ENCODE measurements at regions of chr13 and their contacts with region 1.

Region 1: GRCh38 chr13:28027607-28028364 is 39.3 kb upstream of the URAD start:
- DNase-seq: no peak
- H3K4me3 ChIP-seq: no peak overlapping the region
- H3K27ac ChIP-seq: no peak overlapping the region
- H3K4me1 ChIP-seq: no peaks in the 10 kb centered on the region
- CTCF ChIP-seq: no peak

Region 2: GRCh38 chr13:28012896-28013295 is 14.9 kb before region 1 on chr13:
- CTCF ChIA-PET with region 1: no interaction called
- POLR2A ChIA-PET with region 1: interaction called, 11 read pairs
- intact Hi-C with region 1: no loop called
- DNase-seq: peak; percentile 12
- H3K4me3 ChIP-seq: no peak overlapping the region
- H3K27ac ChIP-seq: no peak overlapping the region
- H3K4me1 ChIP-seq: peaks cover 6% of the 10 kb centered on the region
- CTCF ChIP-seq: no peak

Measured in OCI-LY7 (cell line).